H1 (cell line): ENCODE measurements at regions of chr7 and their contacts with region 1.

Region 1: GRCh38 chr7:134888141-134888740 is 98.1 kb upstream of the AGBL3 start:
- DNase-seq: no peak
- H3K4me3 ChIP-seq: no peak overlapping the region
- H3K27ac ChIP-seq: no peak overlapping the region
- H3K4me1 ChIP-seq: peaks cover 0 to 11% (median 6%) of the 10 kb centered on the region in 4 experiments; a peak in 5 of 7 replicates
- H3K27me3 ChIP-seq: no peaks in the 10 kb centered on the region
- CTCF ChIP-seq: no peak
- EP300 ChIP-seq: no peak
- POLR2A ChIP-seq: no peak
- RAD21 ChIP-seq: no peak

Region 2: DNA sequence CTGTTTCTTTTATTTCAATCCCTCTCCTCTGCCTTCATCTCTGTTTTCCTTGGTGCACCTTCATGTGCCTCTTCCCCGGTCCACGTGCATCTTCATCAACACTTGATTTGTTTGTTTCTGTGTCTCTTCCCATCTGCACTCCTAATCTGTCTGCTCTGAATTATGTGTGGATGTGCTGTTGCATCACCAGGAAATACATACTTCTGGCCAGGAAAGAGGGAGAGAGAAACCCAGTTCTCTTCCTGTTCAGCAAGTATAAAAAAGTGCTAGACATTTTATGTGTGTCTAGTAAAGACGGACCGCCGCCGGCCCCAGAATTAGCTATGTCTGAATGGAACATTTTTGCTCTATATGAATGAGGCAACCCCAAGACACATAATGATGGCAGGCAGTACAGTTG is 15.0 kb before region 1 on chr7:
- CTCF ChIA-PET with region 1: interaction called, 10 read pairs
- POLR2A ChIA-PET with region 1: interaction called, 7 read pairs
- DNase-seq: no peak
- H3K4me3 ChIP-seq: no peak overlapping the region
- H3K27ac ChIP-seq: no peak overlapping the region
- H3K4me1 ChIP-seq: 0 out of 7 replicates have a peak, but pooled peaks cover 0 to 4% (median 0%) of the 10 kb centered on the region in 4 experiments
- H3K27me3 ChIP-seq: peaks cover 0 to 1% (median 0%) of the 10 kb centered on the region in 4 experiments; a peak in 1 of 7 replicates
- CTCF ChIP-seq: no peak
- EP300 ChIP-seq: no peak
- POLR2A ChIP-seq: no peak
- RAD21 ChIP-seq: no peak

Region 3: DNA sequence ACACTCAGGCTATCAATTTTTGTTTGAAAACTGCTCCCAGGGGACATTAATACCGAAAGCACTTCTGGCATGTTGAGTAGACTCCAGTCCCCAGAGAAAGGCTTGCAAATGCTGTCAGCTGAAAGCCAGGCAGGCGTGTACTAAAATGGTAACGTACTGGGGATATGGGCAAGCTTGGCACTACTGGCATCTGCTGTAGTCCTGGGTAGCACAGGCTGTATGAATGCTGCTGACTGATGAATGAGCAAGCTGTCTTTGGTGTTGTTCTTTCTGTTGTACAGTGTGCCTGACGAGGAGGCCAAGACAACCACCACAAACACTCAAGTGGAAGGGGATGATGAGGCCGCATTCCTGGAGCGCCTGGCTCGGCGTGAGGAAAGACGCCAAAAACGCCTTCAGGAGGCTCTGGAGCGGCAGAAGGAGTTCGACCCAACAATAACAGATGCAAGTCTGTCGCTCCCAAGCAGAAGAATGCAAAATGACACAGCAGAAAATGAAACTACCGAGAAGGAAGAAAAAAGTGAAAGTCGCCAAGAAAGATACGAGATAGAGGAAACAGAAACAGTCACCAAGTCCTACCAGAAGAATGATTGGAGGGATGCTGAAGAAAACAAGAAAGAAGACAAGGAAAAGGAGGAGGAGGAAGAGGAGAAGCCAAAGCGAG is 44.6 kb after region 1 on chr7:
- CTCF ChIA-PET with region 1: no interaction called
- POLR2A ChIA-PET with region 1: no interaction called
- DNase-seq: no peak
- H3K4me3 ChIP-seq: no peak overlapping the region
- H3K27ac ChIP-seq: no peak overlapping the region
- H3K4me1 ChIP-seq: no peaks in the 10 kb centered on the region
- H3K27me3 ChIP-seq: no peaks in the 10 kb centered on the region
- CTCF ChIP-seq: no peak
- EP300 ChIP-seq: no peak
- POLR2A ChIP-seq: no peak
- RAD21 ChIP-seq: no peak